ENCODE measurements at regions of chr15 and their contacts with region 1.

Region 1: DNA sequence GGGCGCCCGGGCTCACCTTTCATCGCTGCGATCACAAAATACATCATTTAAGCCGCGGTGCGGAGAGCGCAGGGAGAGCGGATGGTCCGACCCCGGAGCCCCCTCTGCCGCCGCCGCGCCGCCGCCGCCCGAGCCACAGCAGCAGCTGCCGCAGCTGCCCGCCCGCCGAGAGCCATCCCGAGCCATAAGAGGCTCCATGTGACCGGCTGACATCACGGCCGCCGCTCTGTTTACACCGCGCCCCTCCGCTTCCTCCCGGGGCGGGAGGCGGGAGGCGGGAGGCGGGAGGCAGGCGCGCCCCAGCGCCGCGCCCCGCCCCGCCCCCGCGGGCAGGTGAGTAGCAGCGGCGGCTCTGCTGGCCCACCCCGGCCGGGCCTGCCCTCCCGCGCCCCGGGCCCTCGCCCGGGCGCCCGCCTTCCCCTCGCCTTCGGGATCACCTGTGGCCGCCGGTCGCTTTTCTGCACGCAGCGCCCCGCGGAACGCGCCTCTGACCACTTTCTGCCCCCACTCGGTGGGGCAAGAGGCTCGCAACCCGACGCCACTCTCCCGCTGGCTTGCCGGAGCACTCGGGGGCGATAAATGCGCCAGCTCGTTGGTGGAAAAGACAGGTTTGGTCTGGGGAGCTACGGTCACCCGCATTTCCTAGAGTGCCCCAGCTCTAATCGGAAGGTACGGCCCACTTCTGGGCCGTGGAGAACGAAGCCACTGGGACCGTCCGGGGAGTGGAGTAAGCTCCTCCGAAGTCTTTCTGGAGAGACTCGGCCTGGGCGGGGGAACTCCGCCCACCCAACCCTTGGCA is 113.6 kb upstream of the ICE2 start:
- DNase-seq: no peak
- ATAC-seq: peak; percentile 74
- H3K4me3 ChIP-seq: peak overlapping the region; percentile 83
- H3K27ac ChIP-seq: no peak overlapping the region
- H3K4me1 ChIP-seq: no peaks in the 10 kb centered on the region
- H3K27me3 ChIP-seq: no peaks in the 10 kb centered on the region; a peak in 1 of 4 replicates
- CTCF ChIP-seq: peak; percentile 20 to 40 (median 35); a peak in 4 of 6 replicates
- EP300 ChIP-seq: no peak
- POLR2A ChIP-seq: peak; percentile 82
- RAD21 ChIP-seq: peak; percentile 19; the same call in 1 of the 2 replicates

Region 2: DNA sequence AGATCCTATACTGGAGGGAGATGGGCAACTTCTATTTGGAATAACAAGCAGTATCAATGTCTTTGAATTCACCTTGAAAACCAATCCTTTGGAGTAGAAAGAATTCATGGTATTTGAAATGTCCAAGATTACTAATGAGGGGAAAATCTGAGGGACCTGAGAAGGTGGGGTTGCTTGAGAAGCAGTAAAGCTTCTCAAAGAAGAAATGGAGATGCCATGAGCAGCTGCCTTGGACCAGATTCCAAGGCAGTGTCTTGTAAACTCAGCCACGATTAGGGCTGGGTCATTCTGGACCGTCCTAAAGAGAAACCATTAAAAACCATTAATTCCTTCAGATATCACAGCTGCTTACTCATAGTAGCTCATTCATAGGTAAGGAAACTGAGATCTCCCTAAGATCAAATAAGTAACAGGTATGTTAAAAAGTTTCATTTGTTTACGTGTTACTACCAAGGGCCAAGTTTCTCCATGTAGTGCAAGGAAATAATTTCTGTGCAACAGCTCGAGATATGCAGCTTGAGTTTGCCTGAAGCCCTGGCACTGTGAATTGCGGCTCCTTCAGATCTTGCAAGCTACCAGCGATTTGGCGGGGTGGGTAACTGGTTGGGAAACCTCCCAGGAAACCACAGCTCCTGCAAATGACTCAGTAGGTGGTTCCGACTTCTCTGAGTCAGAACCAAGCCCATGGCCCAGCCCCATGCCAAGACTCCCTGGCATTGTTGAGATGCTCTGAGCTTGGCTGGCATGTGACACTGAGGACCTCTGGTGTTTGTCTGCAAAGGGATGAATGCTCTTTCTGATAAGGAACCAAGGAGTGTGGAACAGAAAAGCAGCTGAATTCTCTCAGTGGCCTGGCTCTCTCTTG is 339.7 kb after region 1 on chr15:
- CTCF ChIA-PET with region 1: interaction called, 11 read pairs
- POLR2A ChIA-PET with region 1: no interaction called
- RAD21 ChIA-PET with region 1: interaction called, 9 read pairs
- SMC1A ChIA-PET with region 1: interaction called, 15 read pairs
- in situ Hi-C with region 1: no loop called
- intact Hi-C with region 1: no loop called
- DNase-seq: no peak
- ATAC-seq: peak; percentile 66
- H3K4me3 ChIP-seq: no peak overlapping the region
- H3K27ac ChIP-seq: no peak overlapping the region
- H3K4me1 ChIP-seq: no peaks in the 10 kb centered on the region
- H3K27me3 ChIP-seq: peaks cover 0 to 4% of the 10 kb centered on the region in 2 experiments; a peak in 2 of 4 replicates
- CTCF ChIP-seq: peak; percentile 25 to 44 (median 34); a peak in 5 of 6 replicates
- EP300 ChIP-seq: no peak
- POLR2A ChIP-seq: no peak
- RAD21 ChIP-seq: peak; percentile 72

Measured in GM12878 (cell line).